Vagina (tissue), 2 donors: ENCODE measurements at regions of chr20 and their contacts with region 1.

Region 1: DNA sequence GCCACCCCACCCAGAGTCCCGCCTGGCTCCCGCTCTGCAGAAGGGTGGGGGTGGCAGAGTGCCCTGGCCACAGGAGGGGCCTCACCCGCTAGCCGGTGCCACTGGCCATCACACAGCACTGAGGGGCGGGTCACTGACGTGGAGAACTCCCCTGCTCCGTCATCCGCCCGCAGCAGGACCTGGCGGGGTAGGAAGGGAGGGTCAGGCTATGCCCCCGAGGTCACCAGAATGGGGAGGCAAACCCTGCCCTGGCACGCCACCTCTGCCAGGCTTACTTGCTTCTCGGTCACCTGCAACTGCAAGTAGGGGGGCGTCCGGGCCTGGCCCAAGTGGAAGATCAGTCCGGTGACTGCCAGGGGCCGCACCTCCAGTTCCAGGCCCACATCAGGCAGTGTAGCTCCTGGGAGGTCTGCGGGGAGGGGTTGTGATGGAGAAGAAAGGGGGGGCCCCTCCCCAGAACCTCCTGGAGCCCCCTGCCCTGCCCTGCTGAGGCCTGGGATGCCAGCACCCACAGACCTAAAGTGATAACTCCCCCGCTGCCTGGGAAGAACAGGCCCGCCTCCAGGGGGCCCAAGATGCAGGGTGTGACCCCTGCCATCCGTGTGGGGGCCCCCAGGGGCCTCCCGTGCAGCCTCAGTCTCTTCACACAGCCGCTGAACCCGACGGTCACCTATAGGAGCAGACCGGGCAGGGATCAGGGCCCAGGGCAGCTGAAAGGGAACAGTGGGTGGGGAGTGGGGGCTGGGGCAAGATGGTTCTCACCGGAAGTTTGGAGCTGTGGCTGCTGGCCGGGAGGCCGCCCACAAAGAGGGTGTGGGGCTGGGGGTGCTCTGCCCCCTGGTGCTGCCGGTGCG is 7.3 kb downstream of the ADRM1 start:
- DNase-seq: no peak
- H3K4me3 ChIP-seq: no peak overlapping the region
- H3K27ac ChIP-seq: no peak overlapping the region
- H3K4me1 ChIP-seq: peaks cover 36% of the 10 kb centered on the region
- H3K27me3 ChIP-seq: no peaks in the 10 kb centered on the region
- CTCF ChIP-seq: no peak
- POLR2A ChIP-seq: no peak

Region 2: GRCh38 chr20:62332422-62332821 is 22.3 kb after region 1 on chr20:
- intact Hi-C with region 1: loop called (anchors 1 kb)
- DNase-seq: no peak
- H3K4me3 ChIP-seq: no peak overlapping the region
- H3K27ac ChIP-seq: no peak overlapping the region
- H3K4me1 ChIP-seq: no peaks in the 10 kb centered on the region
- H3K27me3 ChIP-seq: no peaks in the 10 kb centered on the region
- CTCF ChIP-seq: no peak
- POLR2A ChIP-seq: no peak